Common myeloid progenitor, CD34-positive (primary cell): ENCODE measurements at regions of chr9 and their contacts with region 1.

Region 1: GRCh38 chr9:95127249-95128176 is 190.0 kb downstream of the FANCC start:
- DNase-seq: peak; percentile 61 to 76 (median 75)
- H3K4me3 ChIP-seq: peak overlapping the region in 4 of 7 experiments; percentile 13 to 71 (median 44)
- H3K27ac ChIP-seq: no peak overlapping the region
- H3K4me1 ChIP-seq: peaks cover 0 to 6% (median 1%) of the 10 kb centered on the region in 4 experiments
- H3K27me3 ChIP-seq: no peaks in the 10 kb centered on the region

Region 2: DNA sequence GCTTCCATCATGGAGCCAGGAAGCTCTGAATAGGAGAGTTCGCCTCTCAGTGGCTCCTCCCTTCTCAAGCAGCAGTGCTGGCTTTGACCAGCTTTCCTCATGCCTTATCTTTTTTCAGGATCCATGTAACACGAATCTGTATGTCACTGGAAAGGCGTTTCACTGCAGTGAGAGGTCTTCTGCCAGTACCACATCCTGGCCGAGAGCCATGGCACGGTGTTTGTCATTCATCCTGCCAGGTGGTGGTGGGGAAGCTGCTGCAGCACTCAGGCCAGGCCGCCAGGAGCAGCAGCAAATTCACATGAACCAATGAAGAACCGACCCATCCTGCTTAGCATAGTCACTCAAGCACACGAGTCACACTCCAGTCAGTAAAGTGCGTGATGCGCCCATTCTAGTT is 11.0 kb after region 1 on chr9:
- CTCF ChIA-PET with region 1: interaction called, 18 read pairs
- POLR2A ChIA-PET with region 1: no interaction called
- DNase-seq: peak in 2 of 3 donors; percentile 41 to 56
- H3K4me3 ChIP-seq: no peak overlapping the region
- H3K27ac ChIP-seq: no peak overlapping the region
- H3K4me1 ChIP-seq: no peaks in the 10 kb centered on the region
- H3K27me3 ChIP-seq: no peaks in the 10 kb centered on the region

Region 3: DNA sequence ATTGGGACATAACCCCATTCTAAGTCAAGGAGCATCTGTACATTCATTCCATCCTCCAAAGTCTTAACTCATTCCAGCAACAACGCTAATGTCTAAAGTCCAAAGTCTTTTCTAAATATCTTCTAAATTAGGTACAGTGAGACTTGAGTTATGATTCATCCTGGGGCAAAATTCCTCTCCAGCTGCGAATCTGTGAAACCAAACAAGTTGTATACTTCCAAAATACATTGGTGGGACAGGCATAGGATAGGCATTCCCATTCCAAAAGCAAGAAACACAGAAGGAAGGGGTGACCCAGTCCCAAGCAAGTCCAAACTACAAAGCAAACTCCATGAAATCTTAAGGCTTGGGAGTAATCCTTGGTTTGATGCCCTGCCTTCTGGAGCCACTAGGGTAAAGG is 287.6 kb after region 1 on chr9:
- CTCF ChIA-PET with region 1: no interaction called
- POLR2A ChIA-PET with region 1: no interaction called
- DNase-seq: no peak
- H3K4me3 ChIP-seq: no peak overlapping the region
- H3K27ac ChIP-seq: no peak overlapping the region
- H3K4me1 ChIP-seq: no peaks in the 10 kb centered on the region
- H3K27me3 ChIP-seq: peaks cover 0 to 4% (median 3%) of the 10 kb centered on the region in 5 experiments